Activated naive CD4-positive, alpha-beta T cell treated with anti-CD3 and anti-CD28 coated beads for 36 hours (primary cell): ENCODE measurements at regions of chr17 and their contacts with region 1.

Region 1: DNA sequence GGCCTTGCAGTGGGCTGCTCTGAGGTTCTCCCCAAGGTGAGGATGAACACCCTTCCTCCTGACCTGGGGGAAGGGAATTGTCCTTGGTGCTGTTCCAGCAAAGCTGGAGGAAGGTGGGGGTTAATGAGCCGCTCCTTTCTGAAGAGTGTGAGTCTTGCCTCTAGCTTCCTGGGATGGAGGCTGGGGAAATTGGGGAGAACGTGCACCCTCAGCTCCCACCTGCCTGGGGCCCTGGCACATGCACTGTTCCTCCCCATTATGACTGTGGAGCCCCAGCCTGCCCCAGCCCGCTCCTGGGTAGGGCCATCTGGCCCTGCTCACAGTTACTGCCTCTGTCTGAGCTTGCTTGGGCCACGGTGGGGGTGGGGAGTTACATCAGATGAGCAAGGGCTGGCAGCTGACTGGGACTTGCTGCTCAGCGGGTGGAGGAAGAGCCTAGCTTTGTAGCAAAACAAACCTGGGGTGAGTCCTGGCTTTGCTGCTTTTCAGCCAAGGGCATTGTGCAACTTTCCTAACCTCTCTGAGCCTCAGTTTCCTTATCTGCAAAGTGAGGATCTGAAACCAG is 11.1 kb downstream of the TNS4 start:
- DNase-seq: peak; percentile 71
- H3K4me3 Mint-ChIP-seq: no peak overlapping the region
- H3K27ac Mint-ChIP-seq: peak overlapping the region; percentile 21
- H3K4me1 Mint-ChIP-seq: peaks cover 50% of the 10 kb centered on the region
- H3K27me3 Mint-ChIP-seq: no peaks in the 10 kb centered on the region

Region 2: DNA sequence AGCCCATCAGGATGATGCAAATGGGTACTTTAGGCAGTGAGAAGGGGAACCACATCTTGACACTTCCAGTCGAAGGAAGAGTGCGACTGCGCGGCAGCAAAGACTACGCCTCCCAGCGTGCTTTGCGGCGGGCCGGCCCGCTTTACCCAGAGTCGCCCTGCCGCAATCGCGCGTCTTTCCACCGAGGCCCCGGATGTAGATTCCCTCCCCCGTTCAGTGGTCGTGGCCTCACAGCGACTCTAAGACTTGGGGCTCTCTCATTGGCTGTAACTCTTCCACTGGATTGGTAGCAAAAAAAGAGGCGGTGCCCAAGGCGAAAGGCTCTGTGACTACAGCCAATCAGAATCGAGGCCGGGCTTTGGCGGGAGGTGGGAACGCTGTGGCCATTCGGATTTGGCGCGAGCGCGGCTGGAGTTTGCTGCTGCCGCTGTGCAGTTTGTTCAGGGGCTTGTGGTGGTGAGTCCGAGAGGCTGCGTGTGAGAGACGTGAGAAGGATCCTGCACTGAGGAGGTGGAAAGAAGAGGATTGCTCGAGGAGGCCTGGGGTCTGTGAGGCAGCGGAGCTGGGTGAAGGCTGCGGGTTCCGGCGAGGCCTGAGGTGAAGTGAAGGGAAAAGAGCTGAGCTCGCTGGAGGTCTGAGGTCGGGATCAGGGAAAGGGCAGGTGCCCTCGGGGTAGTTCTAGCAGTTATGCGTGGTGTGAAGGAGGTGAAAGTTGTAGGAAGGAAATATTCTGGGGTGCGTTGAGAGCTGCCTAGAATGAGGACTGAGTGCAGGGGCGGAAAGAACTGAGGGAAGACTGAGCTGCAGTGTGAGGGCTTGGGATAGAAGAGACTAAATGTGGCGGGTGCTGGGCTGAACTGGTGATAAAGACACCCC is 202.6 kb before region 1 on chr17 and contains the start of gene CDC6:
- CTCF ChIA-PET with region 1: no interaction called
- intact Hi-C with region 1: no loop called
- DNase-seq: peak; percentile 100
- H3K4me3 Mint-ChIP-seq: peak within 1 kb of the TSS; percentile 99
- H3K27ac Mint-ChIP-seq: peak within 1 kb of the TSS; percentile 94
- H3K4me1 Mint-ChIP-seq: peaks cover 47% of the 10 kb centered on the region
- H3K27me3 Mint-ChIP-seq: no peaks in the 10 kb centered on the region
- total RNA-seq, gene CDC6: 86.5 to 90.4 TPM

Region 3: DNA sequence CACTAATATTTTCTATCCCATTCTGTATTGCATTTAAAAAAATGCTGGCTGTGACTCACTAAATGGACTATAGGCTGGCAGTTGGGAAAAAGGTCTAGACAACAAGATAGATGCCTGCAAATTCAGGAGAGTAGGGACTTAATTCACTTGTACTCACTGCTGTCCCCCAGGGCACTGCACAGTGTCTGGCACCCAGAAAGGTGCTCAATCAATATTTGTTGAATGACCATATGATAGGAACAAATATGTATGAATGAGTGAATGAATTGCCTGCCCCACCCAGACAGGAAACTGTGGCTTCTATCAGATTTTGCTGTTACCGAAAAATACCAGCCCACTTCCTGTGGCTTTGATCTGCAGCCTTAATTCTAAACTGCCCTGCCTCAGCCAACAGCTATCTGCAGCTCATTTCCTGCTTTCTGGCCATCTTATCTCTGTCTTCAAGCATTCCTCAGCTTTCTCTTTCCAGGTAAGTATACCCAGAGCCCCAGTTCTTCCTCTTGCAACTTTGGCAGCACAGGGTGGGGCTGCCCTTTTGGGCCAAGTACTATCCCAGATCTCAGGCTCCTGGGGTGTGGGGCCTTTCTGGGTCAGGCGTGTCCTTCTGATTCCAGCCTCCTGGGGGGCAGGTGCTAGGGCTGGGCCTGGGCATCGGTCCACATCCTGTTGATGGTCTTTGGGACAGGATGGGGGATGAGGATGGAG is 26.4 kb after region 1 on chr17:
- CTCF ChIA-PET with region 1: interaction called, 7 read pairs
- intact Hi-C with region 1: loop called (anchors 2 kb)
- DNase-seq: peak; percentile 88
- H3K4me3 Mint-ChIP-seq: peak overlapping the region; percentile 64
- H3K27ac Mint-ChIP-seq: peak overlapping the region; percentile 82
- H3K4me1 Mint-ChIP-seq: peaks cover 48% of the 10 kb centered on the region
- H3K27me3 Mint-ChIP-seq: peaks cover 3% of the 10 kb centered on the region